A673 (cell line): ENCODE measurements at regions of chr18 and their contacts with region 1.

Region 1: DNA sequence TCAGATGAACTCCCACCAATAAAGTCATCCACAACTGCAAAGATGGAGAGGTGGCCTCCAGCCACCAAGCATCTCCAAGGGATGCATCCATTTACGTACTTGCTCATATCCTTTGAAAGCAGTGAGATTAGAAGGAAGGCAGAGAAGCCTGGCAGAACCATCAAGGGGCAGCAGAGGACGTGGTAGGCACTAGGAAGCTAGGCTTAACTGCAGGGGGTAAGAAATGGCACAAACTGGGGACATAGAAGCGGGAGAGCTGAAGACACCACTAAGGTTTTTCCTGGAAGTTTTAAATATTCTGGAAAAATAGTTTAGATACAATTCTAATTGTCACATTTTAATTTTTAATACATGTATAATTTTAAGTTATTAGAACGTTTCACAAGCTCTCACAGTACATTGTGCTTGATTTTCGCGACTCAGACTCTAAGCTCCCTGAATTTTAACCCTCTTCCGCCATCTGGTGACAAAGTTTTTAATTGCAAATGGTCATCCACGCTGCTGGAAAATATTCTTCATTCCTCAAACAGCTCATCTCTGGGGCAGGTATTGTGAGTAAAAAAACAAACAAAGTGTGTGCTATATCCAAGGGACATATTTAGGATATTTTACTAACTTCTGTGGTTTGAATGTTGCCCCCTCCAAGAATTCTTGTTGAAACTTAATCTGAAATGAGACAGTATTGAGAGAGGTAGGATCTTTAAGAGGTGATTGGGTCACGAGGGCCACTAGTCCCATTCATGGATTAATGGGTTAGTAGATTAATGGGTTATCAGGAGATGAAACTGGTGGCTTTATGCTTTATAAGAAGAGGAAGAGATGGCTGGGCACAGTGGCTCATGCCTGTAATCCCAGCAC is 1.6 kb upstream of the PSTPIP2 start:
- DNase-seq: peak; percentile 83
- H3K4me3 ChIP-seq: no peak overlapping the region
- H3K27ac ChIP-seq: no peak overlapping the region
- H3K4me1 ChIP-seq: peaks cover 5% of the 10 kb centered on the region
- H3K27me3 ChIP-seq: no peaks in the 10 kb centered on the region
- CTCF ChIP-seq: peak; percentile 70

Region 2: GRCh38 chr18:45863469-45863868 is 210.2 kb before region 1 on chr18:
- CTCF ChIA-PET with region 1: no interaction called
- POLR2A ChIA-PET with region 1: no interaction called
- intact Hi-C with region 1: no loop called
- DNase-seq: no peak
- H3K4me3 ChIP-seq: no peak overlapping the region
- H3K27ac ChIP-seq: no peak overlapping the region
- H3K4me1 ChIP-seq: no peaks in the 10 kb centered on the region
- H3K27me3 ChIP-seq: no peaks in the 10 kb centered on the region
- CTCF ChIP-seq: no peak

Region 3: DNA sequence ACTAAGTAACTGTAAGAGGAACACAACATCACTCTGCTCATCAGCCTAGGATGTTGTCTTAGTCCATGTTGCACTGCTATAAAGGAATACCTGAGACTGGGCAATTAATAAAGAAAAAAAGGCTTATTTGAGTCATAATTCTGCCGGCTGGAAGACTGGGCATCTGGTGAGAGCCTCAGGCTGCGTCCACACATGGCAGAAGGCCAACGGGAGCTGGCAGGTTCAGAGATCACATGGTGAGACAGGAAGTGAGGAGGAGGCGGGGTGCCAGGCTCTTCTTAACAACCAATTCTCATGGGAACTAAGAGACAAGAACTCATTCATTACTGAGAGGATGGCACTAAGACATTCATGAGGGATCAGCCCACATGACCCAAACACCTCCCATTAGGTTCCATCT is 153.3 kb before region 1 on chr18:
- CTCF ChIA-PET with region 1: interaction called, 7 read pairs
- POLR2A ChIA-PET with region 1: no interaction called
- intact Hi-C with region 1: loop called (anchors 10 kb)
- DNase-seq: peak; percentile 84
- H3K4me3 ChIP-seq: no peak overlapping the region
- H3K27ac ChIP-seq: no peak overlapping the region
- H3K4me1 ChIP-seq: peaks cover 13% of the 10 kb centered on the region
- H3K27me3 ChIP-seq: no peaks in the 10 kb centered on the region
- CTCF ChIP-seq: no peak

Region 4: DNA sequence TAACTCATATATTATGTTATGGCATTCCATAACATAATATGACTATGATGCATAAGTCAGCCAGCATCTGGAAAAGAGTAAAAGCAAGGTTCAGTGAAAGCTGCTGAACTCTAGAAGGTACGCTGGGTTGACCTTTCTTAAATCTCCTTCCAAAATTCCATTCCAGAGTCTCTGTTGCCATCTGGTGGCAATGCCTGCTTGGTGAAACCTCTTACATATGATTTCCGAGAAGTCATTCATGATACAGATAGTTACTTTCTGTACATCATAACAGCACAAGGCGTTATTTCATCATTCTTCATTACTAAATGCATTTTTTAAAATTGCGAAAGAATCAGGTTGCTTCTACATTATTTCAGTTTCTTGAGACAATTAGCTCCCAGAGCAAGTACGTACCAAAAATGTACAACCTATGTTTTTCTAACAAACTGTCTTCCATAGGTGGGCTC is 99.6 kb before region 1 on chr18:
- CTCF ChIA-PET with region 1: no interaction called
- POLR2A ChIA-PET with region 1: interaction called, 4 read pairs
- intact Hi-C with region 1: loop called (anchors 5 kb)
- DNase-seq: peak; percentile 82
- H3K4me3 ChIP-seq: no peak overlapping the region
- H3K27ac ChIP-seq: no peak overlapping the region
- H3K4me1 ChIP-seq: no peaks in the 10 kb centered on the region
- H3K27me3 ChIP-seq: no peaks in the 10 kb centered on the region
- CTCF ChIP-seq: peak; percentile 81

Region 5: DNA sequence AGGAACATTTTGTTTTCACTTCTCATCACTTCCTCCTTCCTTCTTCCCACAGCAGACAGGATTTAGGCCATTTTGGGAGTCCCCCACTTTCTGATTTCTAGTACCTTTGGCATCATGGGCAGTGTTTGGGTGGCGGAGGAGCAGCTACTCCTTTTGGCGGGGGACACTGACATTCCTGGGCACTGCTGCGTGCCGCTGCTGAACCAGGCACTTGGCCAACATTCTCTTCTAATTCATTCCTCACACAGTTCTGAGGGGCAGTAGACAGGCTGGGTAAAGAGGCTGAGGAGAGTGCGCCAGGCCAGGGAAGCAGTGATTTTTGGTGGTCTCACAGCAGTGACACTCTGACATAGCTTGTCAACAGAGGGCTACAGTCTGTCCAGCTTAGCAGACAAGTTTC is 313.1 kb after region 1 on chr18:
- CTCF ChIA-PET with region 1: no interaction called
- POLR2A ChIA-PET with region 1: no interaction called
- intact Hi-C with region 1: no loop called
- DNase-seq: no peak
- H3K4me3 ChIP-seq: no peak overlapping the region
- H3K27ac ChIP-seq: no peak overlapping the region
- H3K4me1 ChIP-seq: no peaks in the 10 kb centered on the region
- H3K27me3 ChIP-seq: no peaks in the 10 kb centered on the region
- CTCF ChIP-seq: no peak